ENCODE measurements at regions of chr19 and their contacts with region 1.

Region 1: DNA sequence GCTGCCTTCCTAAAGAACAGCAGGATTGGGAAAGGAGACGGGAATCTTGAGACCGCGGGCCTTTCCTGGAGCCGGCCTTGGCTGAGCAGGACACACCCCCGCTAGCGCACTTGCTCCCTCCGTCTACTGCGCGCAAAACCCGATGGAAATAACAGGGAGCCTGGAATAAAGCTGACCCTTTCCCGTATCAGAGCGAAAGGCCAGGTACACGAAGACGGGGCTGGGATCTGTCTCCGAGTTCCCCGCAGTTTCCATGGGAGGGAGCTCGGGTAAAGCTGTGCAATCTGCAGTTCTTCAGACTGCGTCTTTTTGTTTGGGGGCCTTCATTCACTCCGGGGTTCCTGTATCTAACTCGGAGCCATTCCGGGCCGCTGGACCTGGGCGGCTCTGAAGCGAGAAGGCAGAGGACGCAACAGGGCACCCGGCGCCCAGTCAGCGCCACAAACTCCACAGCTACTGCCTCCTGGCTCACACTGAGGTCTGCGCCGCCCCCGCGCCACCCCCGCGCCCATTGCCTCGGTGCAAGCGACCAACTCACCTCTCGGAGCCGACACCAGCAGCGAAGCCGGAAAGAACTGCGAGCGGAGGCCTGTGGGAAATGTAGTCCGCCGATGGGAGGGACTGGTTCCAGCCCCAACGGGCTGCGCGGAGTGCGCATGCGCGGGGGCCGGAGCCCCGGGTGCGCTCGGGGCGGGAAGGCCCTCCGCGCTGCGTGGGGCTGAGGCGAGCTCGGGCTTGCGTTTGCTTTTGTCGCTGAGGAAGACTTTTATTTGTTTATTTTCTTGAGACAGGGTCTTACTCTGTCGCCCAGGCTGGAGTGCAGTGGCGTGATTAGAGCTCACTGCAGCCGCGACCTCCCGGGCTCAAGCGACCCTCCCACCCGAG is at the start of gene ZFP14:
- DNase-seq: peak; percentile 88 to 97 (median 95)
- ATAC-seq: peak; percentile 97
- H3K4me3 ChIP-seq: peak within 1 kb of the TSS; percentile 68 to 82
- H3K4me3 Mint-ChIP-seq: peak within 1 kb of the TSS; percentile 95
- H3K27ac ChIP-seq: peak within 1 kb of the TSS; percentile 81 to 84
- H3K27ac Mint-ChIP-seq: peak within 1 kb of the TSS; percentile 98
- H3K4me1 ChIP-seq: peaks cover 10% of the 10 kb centered on the region
- H3K4me1 Mint-ChIP-seq: peaks cover 29% of the 10 kb centered on the region
- H3K27me3 ChIP-seq: no peaks in the 10 kb centered on the region
- H3K27me3 Mint-ChIP-seq: no peaks in the 10 kb centered on the region
- CTCF ChIP-seq: peak; percentile 58
- total RNA-seq, gene ZFP14: 5.0 to 5.7 TPM

Region 2: GRCh38 chr19:36418287-36419001 is 39.6 kb after region 1 on chr19 and contains the start of gene ZFP82:
- CTCF ChIA-PET with region 1: no interaction called
- POLR2A ChIA-PET with region 1: interaction called, 3 read pairs
- intact Hi-C with region 1: loop called (anchors 1 to 2 kb)
- DNase-seq: peak; percentile 56 to 87 (median 75)
- ATAC-seq: peak; percentile 88
- H3K4me3 ChIP-seq: peak within 1 kb of the TSS; percentile 95
- H3K4me3 Mint-ChIP-seq: peak within 1 kb of the TSS; percentile 90
- H3K27ac ChIP-seq: peak within 1 kb of the TSS; percentile 76 to 91
- H3K27ac Mint-ChIP-seq: peak within 1 kb of the TSS; percentile 93
- H3K4me1 ChIP-seq: peaks cover 19% of the 10 kb centered on the region
- H3K4me1 Mint-ChIP-seq: peaks cover 32% of the 10 kb centered on the region
- H3K27me3 ChIP-seq: peaks cover 0 to 10% of the 10 kb centered on the region in 2 experiments
- H3K27me3 Mint-ChIP-seq: peaks cover 14% of the 10 kb centered on the region
- CTCF ChIP-seq: no peak
- total RNA-seq, gene ZFP82: 5.3 to 5.6 TPM

Region 3: GRCh38 chr19:36483653-36484052 is 104.8 kb after region 1 on chr19:
- CTCF ChIA-PET with region 1: no interaction called
- POLR2A ChIA-PET with region 1: no interaction called
- intact Hi-C with region 1: no loop called
- DNase-seq: no peak
- ATAC-seq: no peak
- H3K4me3 ChIP-seq: no peak overlapping the region
- H3K4me3 Mint-ChIP-seq: no peak overlapping the region
- H3K27ac ChIP-seq: no peak overlapping the region
- H3K27ac Mint-ChIP-seq: no peak overlapping the region
- H3K4me1 ChIP-seq: peaks cover 6% of the 10 kb centered on the region
- H3K4me1 Mint-ChIP-seq: peaks cover 22% of the 10 kb centered on the region
- H3K27me3 ChIP-seq: no peaks in the 10 kb centered on the region
- H3K27me3 Mint-ChIP-seq: no peaks in the 10 kb centered on the region
- CTCF ChIP-seq: no peak

Region 4: GRCh38 chr19:36573020-36573885 is 194.4 kb after region 1 on chr19 and contains the start of gene ZNF529:
- CTCF ChIA-PET with region 1: no interaction called
- POLR2A ChIA-PET with region 1: interaction called, 4 read pairs
- intact Hi-C with region 1: loop called in 1 of 2 experiments (anchors 1 kb)
- DNase-seq: peak; percentile 75 to 98 (median 85)
- ATAC-seq: peak; percentile 93
- H3K4me3 ChIP-seq: peak within 1 kb of the TSS; percentile 87 to 99
- H3K4me3 Mint-ChIP-seq: peak within 1 kb of the TSS; percentile 87
- H3K27ac ChIP-seq: peak within 1 kb of the TSS; percentile 96 to 98
- H3K27ac Mint-ChIP-seq: peak within 1 kb of the TSS; percentile 99
- H3K4me1 ChIP-seq: peaks cover 19% of the 10 kb centered on the region
- H3K4me1 Mint-ChIP-seq: peaks cover 45% of the 10 kb centered on the region
- H3K27me3 ChIP-seq: no peaks in the 10 kb centered on the region
- H3K27me3 Mint-ChIP-seq: no peaks in the 10 kb centered on the region
- CTCF ChIP-seq: no peak
- total RNA-seq, gene ZNF529: 44.0 to 46.4 TPM

Region 5: GRCh38 chr19:36772311-36773222 is 393.7 kb after region 1 on chr19 and contains the start of gene ZNF850:
- CTCF ChIA-PET with region 1: no interaction called
- POLR2A ChIA-PET with region 1: no interaction called
- intact Hi-C with region 1: loop called in 1 of 2 experiments (anchors 1 kb)
- DNase-seq: peak; percentile 86 to 97 (median 95)
- ATAC-seq: peak; percentile 90
- H3K4me3 ChIP-seq: peak within 1 kb of the TSS; percentile 77 to 100
- H3K4me3 Mint-ChIP-seq: peak within 1 kb of the TSS; percentile 99
- H3K27ac ChIP-seq: peak within 1 kb of the TSS; percentile 85 to 89
- H3K27ac Mint-ChIP-seq: peak within 1 kb of the TSS; percentile 94
- H3K4me1 ChIP-seq: peaks cover 21% of the 10 kb centered on the region
- H3K4me1 Mint-ChIP-seq: peaks cover 23% of the 10 kb centered on the region
- H3K27me3 ChIP-seq: no peaks in the 10 kb centered on the region
- H3K27me3 Mint-ChIP-seq: no peaks in the 10 kb centered on the region
- CTCF ChIP-seq: no peak
- total RNA-seq, gene ZNF850: 1.5 to 2.7 TPM

Region 6: GRCh38 chr19:36850559-36851442 is 471.9 kb after region 1 on chr19 and contains the start of gene ZNF345:
- CTCF ChIA-PET with region 1: no interaction called
- POLR2A ChIA-PET with region 1: no interaction called
- intact Hi-C with region 1: loop called in 1 of 2 experiments (anchors 1 kb)
- DNase-seq: peak; percentile 66 to 94 (median 85)
- ATAC-seq: peak; percentile 81
- H3K4me3 ChIP-seq: peak within 1 kb of the TSS; percentile 83 to 92
- H3K4me3 Mint-ChIP-seq: no peak within 1 kb of the TSS
- H3K27ac ChIP-seq: peak within 1 kb of the TSS; percentile 74 to 94
- H3K27ac Mint-ChIP-seq: no peak within 1 kb of the TSS
- H3K4me1 ChIP-seq: peaks cover 14% of the 10 kb centered on the region
- H3K4me1 Mint-ChIP-seq: peaks cover 20% of the 10 kb centered on the region
- H3K27me3 ChIP-seq: peaks cover 0 to 2% of the 10 kb centered on the region in 2 experiments
- H3K27me3 Mint-ChIP-seq: no peaks in the 10 kb centered on the region
- CTCF ChIP-seq: no peak
- total RNA-seq, gene ZNF345: 7.8 to 8.0 TPM

Region 7: DNA sequence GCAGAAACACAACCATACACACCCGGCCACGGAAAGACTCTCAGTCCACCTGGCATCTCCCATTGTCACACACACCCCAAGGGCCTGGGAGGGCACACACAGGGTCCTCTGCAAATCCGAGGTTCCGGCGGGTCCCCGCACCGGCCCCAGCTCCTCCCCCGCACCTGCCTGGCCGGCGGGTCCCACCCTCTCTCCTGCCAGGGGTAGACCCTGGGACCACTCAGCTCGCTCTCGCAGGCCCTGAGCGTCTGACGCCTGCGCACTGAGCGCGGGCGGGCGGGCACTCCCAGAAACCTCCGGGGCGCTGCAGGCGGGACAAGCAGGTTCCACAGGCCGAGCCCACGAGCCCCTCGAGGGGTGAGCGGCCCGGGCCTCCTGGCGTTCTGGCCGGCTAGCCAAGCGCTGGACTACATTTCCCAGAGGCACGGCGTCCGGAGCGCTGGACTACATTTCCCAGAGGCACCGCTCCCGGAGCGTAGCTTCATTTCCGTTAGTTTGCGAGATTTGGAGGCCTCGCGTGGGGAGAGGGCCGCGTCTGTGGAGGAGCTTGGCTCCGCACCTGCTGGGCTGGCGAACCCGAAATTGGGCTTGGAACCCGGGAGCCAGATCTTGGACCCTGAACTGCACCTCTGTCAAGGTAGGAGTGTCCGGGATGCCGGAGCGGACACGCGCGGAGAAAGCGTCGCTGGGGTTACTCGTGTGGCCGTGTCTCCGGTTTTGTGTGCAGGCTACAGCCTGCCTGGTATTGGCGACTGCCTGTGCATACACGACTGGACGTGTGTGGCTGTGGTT is 699.3 kb after region 1 on chr19 and contains the start of gene ZNF420:
- CTCF ChIA-PET with region 1: interaction called, 5 read pairs
- POLR2A ChIA-PET with region 1: no interaction called
- intact Hi-C with region 1: loop called in 1 of 2 experiments (anchors 2 kb)
- DNase-seq: peak; percentile 78 to 96 (median 89)
- ATAC-seq: peak; percentile 88
- H3K4me3 ChIP-seq: peak within 1 kb of the TSS; percentile 60 to 71
- H3K4me3 Mint-ChIP-seq: peak within 1 kb of the TSS; percentile 89
- H3K27ac ChIP-seq: peak within 1 kb of the TSS; percentile 56 to 82
- H3K27ac Mint-ChIP-seq: peak within 1 kb of the TSS; percentile 92
- H3K4me1 ChIP-seq: peaks cover 9% of the 10 kb centered on the region
- H3K4me1 Mint-ChIP-seq: peaks cover 34% of the 10 kb centered on the region
- H3K27me3 ChIP-seq: no peaks in the 10 kb centered on the region
- H3K27me3 Mint-ChIP-seq: no peaks in the 10 kb centered on the region
- CTCF ChIP-seq: no peak
- total RNA-seq, gene ZNF420: 7.0 to 8.9 TPM

Region 8: DNA sequence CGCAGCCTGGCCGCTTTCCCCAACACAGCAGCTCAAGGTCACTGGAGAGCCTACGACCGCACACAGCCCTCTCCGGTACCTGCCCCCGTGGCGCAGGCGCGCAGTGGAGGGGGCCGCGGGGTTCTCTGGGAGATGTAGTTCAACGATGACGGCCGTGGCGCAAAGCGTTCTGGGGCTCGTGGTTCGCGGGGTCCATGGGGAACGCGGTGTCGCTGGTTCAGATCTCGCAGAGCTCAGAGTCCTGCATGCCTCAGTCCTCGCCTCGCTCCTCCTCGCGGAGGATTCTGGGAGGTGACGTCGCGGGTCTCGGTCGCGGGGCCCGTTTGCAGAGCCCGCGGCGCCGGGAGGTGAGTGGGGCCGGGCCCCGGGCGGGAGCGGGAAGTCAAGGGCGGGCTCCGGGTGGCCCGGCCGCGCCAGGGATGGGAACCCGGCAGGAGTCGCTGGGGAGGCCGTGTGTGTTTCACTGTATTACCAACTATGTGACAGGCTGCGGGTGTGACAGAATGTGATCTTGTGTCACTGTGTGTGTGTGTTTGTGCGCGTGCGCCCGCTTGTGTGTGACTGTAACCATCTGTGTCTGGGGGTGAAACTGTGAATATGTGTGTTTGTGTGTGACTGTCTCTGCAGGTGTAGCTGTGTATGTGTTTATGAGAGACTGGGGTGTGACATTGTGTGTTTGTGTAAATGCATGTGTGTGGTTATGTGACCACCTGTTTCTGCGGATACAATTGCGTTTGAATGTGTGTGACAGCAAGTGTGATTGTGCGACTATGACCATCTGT is 992.2 kb after region 1 on chr19 and contains the start of gene ZNF527:
- CTCF ChIA-PET with region 1: no interaction called
- POLR2A ChIA-PET with region 1: no interaction called
- intact Hi-C with region 1: loop called in 1 of 2 experiments (anchors 5 kb)
- DNase-seq: peak; percentile 94 to 98 (median 97)
- ATAC-seq: peak; percentile 92
- H3K4me3 ChIP-seq: peak within 1 kb of the TSS; percentile 80 to 95
- H3K4me3 Mint-ChIP-seq: peak within 1 kb of the TSS; percentile 99
- H3K27ac ChIP-seq: peak within 1 kb of the TSS; percentile 82 to 90
- H3K27ac Mint-ChIP-seq: peak within 1 kb of the TSS; percentile 96
- H3K4me1 ChIP-seq: peaks cover 7% of the 10 kb centered on the region
- H3K4me1 Mint-ChIP-seq: peaks cover 20% of the 10 kb centered on the region
- H3K27me3 ChIP-seq: no peaks in the 10 kb centered on the region
- H3K27me3 Mint-ChIP-seq: no peaks in the 10 kb centered on the region
- CTCF ChIP-seq: no peak
- total RNA-seq, gene ZNF527: 12.9 to 14.2 TPM

Measured in CD8-positive, alpha-beta T cell (primary cell).